CD8-positive, alpha-beta T cell (primary cell): ENCODE measurements at regions of chr7 and their contacts with region 1.

Region 1: DNA sequence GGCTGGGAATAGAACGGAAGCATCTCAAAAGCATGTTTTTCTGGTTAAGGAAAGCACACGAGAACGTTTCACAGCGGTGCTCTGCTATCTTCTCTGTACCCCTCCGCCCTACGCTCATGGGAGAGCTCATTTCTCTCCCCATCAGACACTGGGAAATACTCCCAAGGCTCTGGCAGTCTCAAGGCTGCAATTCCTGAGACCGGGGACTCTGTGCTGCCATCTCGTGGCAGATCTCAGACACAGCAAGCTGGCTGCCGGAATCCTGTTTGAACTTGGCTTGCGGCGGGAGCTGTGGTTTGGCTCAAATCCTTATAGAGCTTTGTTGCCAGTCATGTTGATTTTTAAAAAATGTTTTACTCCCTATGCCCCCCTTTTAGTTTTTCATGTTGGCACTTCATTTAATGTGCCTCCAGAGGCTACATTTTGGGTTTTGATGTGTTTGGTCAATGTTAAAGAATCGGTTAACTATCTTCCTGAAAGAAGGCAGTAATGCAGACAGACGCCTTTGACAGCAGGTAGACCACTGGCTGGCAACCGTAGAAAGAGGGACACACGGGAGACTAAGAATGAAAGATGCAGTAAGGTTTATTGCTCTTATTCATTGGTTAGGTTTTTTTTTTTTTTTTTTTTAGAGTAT is 27.6 kb downstream of the BMPER start:
- DNase-seq: peak; percentile 15 to 74 (median 60)
- ATAC-seq: peak; percentile 56
- H3K4me3 ChIP-seq: no peak overlapping the region
- H3K4me3 Mint-ChIP-seq: no peak overlapping the region
- H3K27ac ChIP-seq: no peak overlapping the region
- H3K27ac Mint-ChIP-seq: no peak overlapping the region
- H3K4me1 ChIP-seq: no peaks in the 10 kb centered on the region
- H3K4me1 Mint-ChIP-seq: peaks cover 2% of the 10 kb centered on the region
- H3K27me3 ChIP-seq: no peaks in the 10 kb centered on the region
- H3K27me3 Mint-ChIP-seq: peaks cover 19% of the 10 kb centered on the region
- CTCF ChIP-seq: peak; percentile 75

Region 2: DNA sequence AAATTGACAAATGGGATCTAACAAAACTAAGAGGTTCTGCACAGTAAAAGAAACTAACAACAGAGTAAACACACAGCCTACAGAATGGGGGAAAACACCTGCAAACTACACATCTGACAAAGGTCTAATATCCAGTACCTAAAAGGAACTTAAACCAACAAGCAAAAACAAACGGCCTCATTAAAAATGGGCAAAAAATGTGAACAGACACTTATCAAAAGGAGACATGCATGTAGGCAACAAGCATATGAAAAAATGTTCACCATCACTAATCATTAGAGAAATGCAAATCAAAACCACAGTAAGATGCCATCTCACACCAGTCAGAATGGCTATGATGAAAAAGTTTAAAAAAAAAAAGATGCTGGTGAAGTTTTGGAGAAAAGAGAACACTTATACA is 1238.8 kb before region 1 on chr7:
- CTCF ChIA-PET with region 1: no interaction called
- POLR2A ChIA-PET with region 1: no interaction called
- intact Hi-C with region 1: loop called in 1 of 2 experiments (anchors 2 kb)
- DNase-seq: no peak
- ATAC-seq: no peak
- H3K4me3 ChIP-seq: no peak overlapping the region
- H3K4me3 Mint-ChIP-seq: no peak overlapping the region
- H3K27ac ChIP-seq: no peak overlapping the region
- H3K27ac Mint-ChIP-seq: no peak overlapping the region
- H3K4me1 ChIP-seq: no peaks in the 10 kb centered on the region
- H3K4me1 Mint-ChIP-seq: peaks cover 6% of the 10 kb centered on the region
- H3K27me3 ChIP-seq: no peaks in the 10 kb centered on the region
- H3K27me3 Mint-ChIP-seq: no peaks in the 10 kb centered on the region
- CTCF ChIP-seq: no peak

Region 3: GRCh38 chr7:32765185-32765584 is 1167.8 kb before region 1 on chr7:
- CTCF ChIA-PET with region 1: interaction called, 3 read pairs
- POLR2A ChIA-PET with region 1: no interaction called
- intact Hi-C with region 1: loop called in 1 of 2 experiments (anchors 1 kb)
- DNase-seq: no peak
- ATAC-seq: no peak
- H3K4me3 ChIP-seq: no peak overlapping the region
- H3K4me3 Mint-ChIP-seq: no peak overlapping the region
- H3K27ac ChIP-seq: no peak overlapping the region
- H3K27ac Mint-ChIP-seq: no peak overlapping the region
- H3K4me1 ChIP-seq: peaks cover 4% of the 10 kb centered on the region
- H3K4me1 Mint-ChIP-seq: peaks cover 12% of the 10 kb centered on the region
- H3K27me3 ChIP-seq: peaks cover 0 to 7% of the 10 kb centered on the region in 2 experiments
- H3K27me3 Mint-ChIP-seq: peaks cover 39% of the 10 kb centered on the region
- CTCF ChIP-seq: no peak

Region 4: DNA sequence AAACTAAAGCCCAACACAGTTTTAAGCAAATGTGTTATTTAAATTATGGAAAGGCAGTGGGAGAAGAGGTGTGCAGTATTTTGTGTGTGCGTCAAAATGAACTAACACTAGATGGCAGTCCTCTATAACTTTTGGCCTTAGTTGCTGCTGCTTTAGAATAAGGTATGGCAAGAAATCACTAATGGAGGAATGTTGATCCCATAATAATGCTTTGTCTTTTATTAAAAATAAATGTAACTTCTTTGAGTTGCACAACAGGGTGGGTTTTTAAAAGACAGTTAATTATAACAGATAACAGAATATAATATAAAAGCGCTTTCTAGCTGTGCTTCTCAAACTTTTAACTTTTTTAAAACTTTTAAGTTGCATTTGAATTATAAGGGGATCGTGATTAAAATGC is 747.2 kb before region 1 on chr7:
- CTCF ChIA-PET with region 1: interaction called, 39 read pairs
- POLR2A ChIA-PET with region 1: no interaction called
- intact Hi-C with region 1: loop called in 1 of 2 experiments (anchors 1 kb)
- DNase-seq: peak in 2 of 9 experiments; percentile 49 to 62
- ATAC-seq: no peak
- H3K4me3 ChIP-seq: no peak overlapping the region
- H3K4me3 Mint-ChIP-seq: no peak overlapping the region
- H3K27ac ChIP-seq: no peak overlapping the region
- H3K27ac Mint-ChIP-seq: no peak overlapping the region
- H3K4me1 ChIP-seq: peaks cover under 1% of the 10 kb centered on the region
- H3K4me1 Mint-ChIP-seq: peaks cover 6% of the 10 kb centered on the region
- H3K27me3 ChIP-seq: no peaks in the 10 kb centered on the region
- H3K27me3 Mint-ChIP-seq: no peaks in the 10 kb centered on the region
- CTCF ChIP-seq: peak; percentile 63

Region 5: DNA sequence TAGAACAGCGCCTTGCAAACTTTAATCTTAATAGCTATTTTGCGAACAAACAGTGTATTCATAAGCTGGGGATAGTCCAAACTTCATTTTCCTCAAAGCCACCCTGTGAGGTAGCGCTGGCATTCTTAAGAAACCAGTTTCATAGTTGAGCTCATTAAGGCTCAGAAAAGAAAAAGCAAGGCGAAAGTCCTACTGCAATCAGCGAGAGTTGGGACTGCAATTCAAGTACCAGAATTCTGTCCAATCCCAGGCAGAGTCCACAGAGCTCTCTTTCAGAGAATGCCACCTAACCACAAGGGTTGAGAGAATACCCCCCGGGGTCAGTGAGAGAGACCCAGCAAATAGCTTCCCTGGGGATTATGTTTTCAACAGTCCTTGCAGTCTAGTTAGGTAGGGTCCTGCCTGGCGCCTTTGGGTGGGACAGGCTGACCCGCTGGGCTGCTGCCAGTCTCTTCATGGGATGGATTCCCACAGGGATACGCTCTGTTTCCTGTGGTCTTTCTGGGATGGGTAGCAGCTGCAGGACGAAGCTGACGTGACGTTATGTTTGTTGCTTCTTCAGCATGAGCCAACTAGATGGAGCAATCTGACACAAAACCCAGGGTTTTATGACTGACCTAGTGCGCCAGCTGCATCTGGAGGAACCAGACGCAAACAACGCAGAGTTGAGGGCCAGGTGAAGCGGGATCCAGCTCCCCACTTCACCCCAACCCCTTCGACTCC is 11.6 kb before region 1 on chr7:
- CTCF ChIA-PET with region 1: interaction called, 35 read pairs
- POLR2A ChIA-PET with region 1: no interaction called
- intact Hi-C with region 1: no loop called
- DNase-seq: no peak
- ATAC-seq: no peak
- H3K4me3 ChIP-seq: no peak overlapping the region
- H3K4me3 Mint-ChIP-seq: no peak overlapping the region
- H3K27ac ChIP-seq: no peak overlapping the region
- H3K27ac Mint-ChIP-seq: no peak overlapping the region
- H3K4me1 ChIP-seq: no peaks in the 10 kb centered on the region
- H3K4me1 Mint-ChIP-seq: no peaks in the 10 kb centered on the region
- H3K27me3 ChIP-seq: no peaks in the 10 kb centered on the region
- H3K27me3 Mint-ChIP-seq: peaks cover 3% of the 10 kb centered on the region
- CTCF ChIP-seq: no peak